CD8-positive, alpha-beta memory T cell (primary cell): ENCODE measurements at regions of chr17 and their contacts with region 1.

Region 1: DNA sequence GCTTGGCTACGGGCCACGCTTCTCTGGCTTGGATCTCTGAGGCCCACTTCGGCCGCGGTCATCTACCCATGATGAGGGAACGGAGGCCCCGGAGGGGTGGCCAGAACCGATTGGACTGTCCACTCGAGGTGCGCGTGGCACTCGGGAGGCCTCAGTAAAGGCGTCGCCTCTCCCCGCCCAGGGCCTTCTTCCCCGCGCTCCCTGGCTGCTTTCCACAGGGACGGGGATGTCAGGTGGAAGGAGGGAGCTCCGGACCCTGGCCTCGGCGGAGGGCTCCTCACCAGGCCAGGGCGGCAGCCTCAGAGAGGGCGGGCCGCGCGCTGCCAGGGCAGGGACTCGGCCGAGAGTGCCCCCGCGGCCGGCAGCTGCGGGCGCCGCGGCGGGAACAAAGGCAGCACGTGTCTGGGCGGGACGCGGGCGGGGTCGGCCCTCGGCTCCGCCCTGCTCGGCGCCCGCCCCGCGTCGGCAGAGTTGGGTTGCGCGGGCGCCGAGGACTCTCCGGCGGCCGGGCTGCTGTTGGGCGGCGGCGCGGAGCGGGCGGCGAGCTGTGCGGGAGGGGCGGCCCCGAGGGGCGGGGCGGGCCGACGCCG is 587 bp upstream of the CDK5R1 start:
- DNase-seq: peak; percentile 61 to 75 (median 71)
- H3K4me3 ChIP-seq: no peak overlapping the region
- H3K4me3 Mint-ChIP-seq: peak overlapping the region; percentile 75 to 86 (median 82)
- H3K27ac ChIP-seq: no peak overlapping the region
- H3K27ac Mint-ChIP-seq: peak overlapping the region in 5 of 8 donors; percentile 42 to 92 (median 66)
- H3K4me1 ChIP-seq: peaks cover 40% of the 10 kb centered on the region
- H3K4me1 Mint-ChIP-seq: peaks cover 35 to 41% (median 38%) of the 10 kb centered on the region in 3 donors
- H3K27me3 ChIP-seq: no peaks in the 10 kb centered on the region
- H3K27me3 Mint-ChIP-seq: peaks cover 0 to 3% of the 10 kb centered on the region in 2 donors

Region 2: GRCh38 chr17:32461853-32462617 is 24.2 kb before region 1 on chr17:
- CTCF ChIA-PET with region 1: interaction called, 44 read pairs
- POLR2A ChIA-PET with region 1: interaction called, 3 read pairs
- DNase-seq: peak; percentile 46 to 67 (median 56)
- H3K4me3 ChIP-seq: no peak overlapping the region
- H3K4me3 Mint-ChIP-seq: peak overlapping the region in 1 of 7 donors; percentile 23
- H3K27ac ChIP-seq: no peak overlapping the region
- H3K27ac Mint-ChIP-seq: peak overlapping the region; percentile 3 to 90 (median 26)
- H3K4me1 ChIP-seq: peaks cover 12% of the 10 kb centered on the region
- H3K4me1 Mint-ChIP-seq: peaks cover 22 to 44% (median 32%) of the 10 kb centered on the region in 3 donors
- H3K27me3 ChIP-seq: no peaks in the 10 kb centered on the region
- H3K27me3 Mint-ChIP-seq: no peaks in the 10 kb centered on the region

Region 3: DNA sequence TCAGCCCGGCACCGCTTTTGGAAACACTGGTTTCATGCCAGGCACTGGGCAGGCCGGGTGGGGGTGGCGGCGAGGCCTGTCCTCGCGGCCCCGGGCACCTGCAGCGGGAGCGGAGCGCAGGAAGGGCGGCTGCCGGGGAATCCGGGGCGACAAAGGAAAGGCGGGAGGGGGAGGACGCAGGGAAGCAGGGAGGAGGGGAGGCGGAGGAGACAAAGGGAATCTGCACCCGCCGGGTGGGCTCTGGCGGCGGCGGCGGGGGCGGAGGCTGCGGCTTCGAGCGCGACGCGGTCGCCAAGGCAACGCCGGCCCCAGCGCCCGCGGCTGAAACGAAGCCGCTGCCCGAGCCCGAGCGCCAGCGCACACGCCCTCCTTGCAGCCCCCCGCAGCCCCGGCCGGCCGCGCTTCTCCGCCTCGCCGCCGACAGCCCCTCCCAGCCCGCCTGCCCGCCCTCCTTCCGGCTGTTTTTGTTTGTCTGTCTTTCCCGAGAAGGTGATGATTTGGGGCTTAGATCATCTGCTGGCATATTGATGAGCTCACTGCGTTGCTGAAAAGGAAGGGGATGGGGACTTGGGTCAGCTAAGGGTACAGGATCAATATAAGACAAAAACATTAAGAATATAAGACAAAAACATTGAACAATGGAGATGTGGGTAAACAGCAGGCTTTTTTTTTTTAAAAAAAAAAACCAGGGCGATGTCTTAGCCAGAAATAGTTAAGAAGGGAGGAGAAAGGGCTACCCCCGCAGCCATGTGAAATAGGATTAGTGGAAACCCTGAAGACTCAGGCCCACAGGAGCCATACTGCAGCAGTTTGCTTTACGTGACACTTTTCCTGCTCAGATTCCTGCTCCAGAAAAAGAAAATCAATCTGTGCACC is 33.3 kb after region 1 on chr17:
- CTCF ChIA-PET with region 1: interaction called, 4 read pairs
- POLR2A ChIA-PET with region 1: interaction called, 23 read pairs
- DNase-seq: peak; percentile 44 to 77 (median 67)
- H3K4me3 ChIP-seq: peak overlapping the region; percentile 46
- H3K4me3 Mint-ChIP-seq: peak overlapping the region; percentile 79 to 86 (median 84)
- H3K27ac ChIP-seq: peak overlapping the region; percentile 75
- H3K27ac Mint-ChIP-seq: peak overlapping the region; percentile 87 to 97 (median 96)
- H3K4me1 ChIP-seq: peaks cover 76% of the 10 kb centered on the region
- H3K4me1 Mint-ChIP-seq: peaks cover 67 to 82% (median 68%) of the 10 kb centered on the region in 3 donors
- H3K27me3 ChIP-seq: no peaks in the 10 kb centered on the region
- H3K27me3 Mint-ChIP-seq: no peaks in the 10 kb centered on the region

Region 4: DNA sequence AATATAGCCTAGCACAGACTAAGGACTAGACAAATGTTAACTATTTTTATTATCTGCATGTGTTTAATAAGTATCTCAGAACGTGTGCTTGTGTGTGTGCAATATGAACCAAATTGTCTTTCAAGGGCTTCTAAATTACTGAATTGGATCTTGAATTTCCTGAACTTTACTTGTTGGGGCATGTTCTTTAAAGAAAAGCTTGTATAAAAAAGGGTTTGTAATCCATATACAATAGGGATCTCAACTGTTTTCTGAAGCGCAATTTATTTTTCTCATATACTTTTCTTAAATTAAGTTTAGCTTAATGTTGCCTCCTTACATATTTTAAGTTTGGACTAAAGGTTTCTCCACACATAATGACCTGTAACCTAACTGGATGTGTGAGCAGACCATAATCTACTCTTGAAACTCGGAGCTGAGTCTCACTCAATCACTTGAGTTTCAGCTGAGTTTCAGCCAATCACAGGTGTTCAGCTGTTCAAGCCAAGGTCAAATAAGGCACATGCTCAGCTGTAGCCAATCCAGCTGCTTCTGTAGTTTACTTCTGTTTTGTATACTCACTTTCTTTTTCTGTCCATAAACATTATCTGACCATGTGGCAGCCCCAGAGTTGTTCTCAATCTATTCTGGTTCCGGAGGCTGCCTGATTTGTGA is 72.9 kb after region 1 on chr17:
- CTCF ChIA-PET with region 1: interaction called, 10 read pairs
- POLR2A ChIA-PET with region 1: no interaction called
- DNase-seq: no peak
- H3K4me3 ChIP-seq: no peak overlapping the region
- H3K4me3 Mint-ChIP-seq: peak overlapping the region in 1 of 7 donors; percentile 70
- H3K27ac ChIP-seq: no peak overlapping the region
- H3K27ac Mint-ChIP-seq: peak overlapping the region in 3 of 8 donors; percentile 19 to 94 (median 47)
- H3K4me1 ChIP-seq: peaks cover 22% of the 10 kb centered on the region
- H3K4me1 Mint-ChIP-seq: peaks cover 32 to 36% (median 33%) of the 10 kb centered on the region in 3 donors
- H3K27me3 ChIP-seq: no peaks in the 10 kb centered on the region
- H3K27me3 Mint-ChIP-seq: no peaks in the 10 kb centered on the region

Region 5: DNA sequence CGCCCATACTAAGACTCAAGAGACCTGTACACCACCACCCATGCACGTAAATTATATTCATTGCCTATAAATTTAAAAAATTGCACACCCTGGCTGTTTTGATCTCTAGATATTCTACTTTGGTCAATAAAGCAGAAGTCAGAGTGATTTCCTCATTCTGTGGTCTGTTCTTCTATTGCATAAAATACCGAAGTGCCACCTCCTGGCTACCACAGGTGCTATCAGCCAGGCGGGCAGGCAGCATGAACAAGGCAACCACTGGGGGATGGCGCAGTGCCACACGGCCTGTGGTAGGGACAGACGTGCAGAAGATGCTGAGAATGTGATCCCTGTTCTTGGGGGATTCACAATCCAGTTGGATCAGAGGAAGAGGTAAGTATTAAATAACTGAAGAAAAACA is 122.9 kb after region 1 on chr17:
- CTCF ChIA-PET with region 1: interaction called, 19 read pairs
- POLR2A ChIA-PET with region 1: no interaction called
- DNase-seq: peak; percentile 47 to 83 (median 67)
- H3K4me3 ChIP-seq: no peak overlapping the region
- H3K4me3 Mint-ChIP-seq: no peak overlapping the region
- H3K27ac ChIP-seq: no peak overlapping the region
- H3K27ac Mint-ChIP-seq: no peak overlapping the region
- H3K4me1 ChIP-seq: no peaks in the 10 kb centered on the region
- H3K4me1 Mint-ChIP-seq: peaks cover 6 to 8% (median 7%) of the 10 kb centered on the region in 3 donors
- H3K27me3 ChIP-seq: no peaks in the 10 kb centered on the region
- H3K27me3 Mint-ChIP-seq: no peaks in the 10 kb centered on the region